OCI-LY7 (cell line): ENCODE measurements at regions of chr16 and their contacts with region 1.

Region 1: DNA sequence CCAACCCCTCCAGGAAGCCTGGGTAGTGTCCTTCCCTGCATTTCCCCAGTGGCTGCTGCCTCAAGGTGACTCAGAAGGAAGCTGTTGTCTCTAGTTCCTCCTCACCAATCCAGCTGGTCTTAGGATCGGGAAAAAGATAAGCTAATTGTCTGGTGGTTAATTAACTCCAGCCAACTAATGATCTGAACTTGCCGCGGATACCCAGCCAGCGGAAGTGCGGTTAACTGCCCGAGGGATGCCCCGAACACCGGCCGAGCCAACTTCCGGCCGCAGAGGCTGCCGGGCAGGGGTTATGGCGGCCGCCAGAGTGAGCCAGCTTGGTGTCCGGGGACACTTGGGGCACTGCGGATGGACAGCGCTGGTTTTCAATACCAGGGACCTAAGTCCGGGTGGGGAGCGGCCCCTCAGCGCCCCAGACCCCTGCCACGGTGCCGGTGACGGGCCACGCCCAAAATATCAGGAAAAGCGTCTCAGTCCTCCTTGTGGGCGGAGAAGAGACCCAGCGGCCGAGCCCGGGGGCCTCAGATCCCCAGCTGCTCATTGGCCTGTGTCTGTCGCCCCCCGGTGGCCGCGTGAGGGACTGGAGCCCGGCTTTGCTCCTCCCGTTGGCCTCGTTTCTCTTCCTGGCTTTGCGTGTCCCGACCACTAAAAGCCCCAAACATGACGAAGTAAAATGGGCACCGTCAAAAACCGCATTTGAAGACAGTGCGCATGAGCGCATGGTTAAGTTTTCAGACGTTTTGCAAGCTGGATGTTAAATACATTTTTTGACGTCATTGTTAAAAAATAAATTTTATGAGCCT is 10.2 kb upstream of the PRSS22 start:
- DNase-seq: peak; percentile 92
- H3K4me3 ChIP-seq: peak overlapping the region; percentile 70
- H3K27ac ChIP-seq: peak overlapping the region; percentile 68
- H3K4me1 ChIP-seq: peaks cover 7% of the 10 kb centered on the region
- CTCF ChIP-seq: peak; percentile 93

Region 2: GRCh38 chr16:2752035-2752849 is 115.9 kb before region 1 on chr16 and contains the start of gene SRRM2:
- CTCF ChIA-PET with region 1: no interaction called
- POLR2A ChIA-PET with region 1: no interaction called
- intact Hi-C with region 1: loop called (anchors 1 kb)
- DNase-seq: peak; percentile 98
- H3K4me3 ChIP-seq: peak within 1 kb of the TSS; percentile 99
- H3K27ac ChIP-seq: peak within 1 kb of the TSS; percentile 95
- H3K4me1 ChIP-seq: peaks cover 35% of the 10 kb centered on the region
- CTCF ChIP-seq: no peak
- total RNA-seq, gene SRRM2: 206 and 208 TPM in 2 replicates

Region 3: DNA sequence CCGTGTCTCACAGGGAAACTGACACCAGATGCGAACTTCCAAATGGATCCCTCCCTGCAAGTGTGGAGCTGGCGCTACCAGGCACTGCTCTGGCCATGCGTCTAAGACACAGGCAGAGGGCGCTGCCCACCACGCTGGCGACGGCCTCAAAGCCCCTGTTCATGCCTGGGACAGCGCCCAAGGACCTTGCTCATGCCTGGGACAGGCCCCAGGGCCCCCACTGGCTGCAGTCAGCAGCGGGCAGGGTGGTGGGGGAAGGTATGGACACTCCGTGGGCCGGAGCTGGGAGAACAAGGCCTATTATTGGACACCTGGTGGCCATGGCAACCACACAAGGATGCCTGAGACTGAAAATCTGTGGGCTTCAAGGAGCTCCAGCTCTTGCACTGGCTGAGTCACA is 29.3 kb before region 1 on chr16:
- CTCF ChIA-PET with region 1: interaction called, 3 read pairs
- POLR2A ChIA-PET with region 1: interaction called, 4 read pairs
- intact Hi-C with region 1: loop called (anchors 1 kb)
- DNase-seq: peak; percentile 74
- H3K4me3 ChIP-seq: no peak overlapping the region
- H3K27ac ChIP-seq: no peak overlapping the region
- H3K4me1 ChIP-seq: no peaks in the 10 kb centered on the region
- CTCF ChIP-seq: peak; percentile 85

Region 4: DNA sequence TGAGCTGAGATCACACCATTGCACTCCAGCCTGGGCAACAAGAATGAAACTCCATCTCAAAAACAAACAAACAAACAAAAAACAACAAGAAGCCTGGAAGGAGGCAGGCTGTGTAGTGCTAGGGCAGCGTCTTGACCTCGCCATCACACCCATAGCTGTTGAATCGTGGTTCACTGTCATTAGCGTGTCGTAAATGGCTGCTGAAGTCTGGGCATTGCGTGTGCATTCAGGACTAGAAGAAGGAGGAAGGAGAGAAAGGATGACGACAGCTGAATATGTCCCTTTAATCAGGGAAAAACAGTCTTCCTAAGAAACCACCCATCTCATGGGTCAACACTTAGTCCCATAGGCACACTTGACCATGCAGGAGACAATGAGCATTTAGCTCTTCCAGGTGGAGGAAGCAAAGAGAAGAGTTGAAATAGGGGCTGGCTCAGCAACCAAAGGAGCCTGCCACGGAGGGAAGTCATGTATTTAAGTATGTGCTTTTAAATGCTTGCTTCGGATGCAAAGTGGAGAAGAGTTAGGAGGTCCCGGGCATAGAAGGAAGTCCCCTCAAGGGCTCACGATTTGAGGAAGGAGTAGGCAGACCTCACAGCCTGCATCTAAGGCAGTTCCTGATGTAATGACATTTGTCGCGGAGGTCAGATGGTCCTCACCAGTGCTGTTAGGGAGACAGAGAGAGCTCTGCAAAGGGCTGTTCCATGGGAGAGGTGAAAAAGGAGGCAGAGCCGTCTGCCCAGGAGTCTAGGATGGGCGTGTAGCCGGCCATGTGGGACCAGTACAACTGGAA is 19.1 kb before region 1 on chr16:
- CTCF ChIA-PET with region 1: no interaction called
- POLR2A ChIA-PET with region 1: no interaction called
- intact Hi-C with region 1: no loop called
- DNase-seq: no peak
- H3K4me3 ChIP-seq: no peak overlapping the region
- H3K27ac ChIP-seq: no peak overlapping the region
- H3K4me1 ChIP-seq: no peaks in the 10 kb centered on the region
- CTCF ChIP-seq: no peak

Region 5: GRCh38 chr16:2911580-2912329 is 43.6 kb after region 1 on chr16 and contains the start of gene FLYWCH1:
- CTCF ChIA-PET with region 1: no interaction called
- POLR2A ChIA-PET with region 1: interaction called, 4 read pairs
- intact Hi-C with region 1: loop called (anchors 2 kb)
- DNase-seq: peak; percentile 100
- H3K4me3 ChIP-seq: peak within 1 kb of the TSS; percentile 77
- H3K27ac ChIP-seq: no peak within 1 kb of the TSS
- H3K4me1 ChIP-seq: peaks cover 12% of the 10 kb centered on the region
- CTCF ChIP-seq: no peak; the same call in 1 of the 2 replicates
- total RNA-seq, gene FLYWCH1: 25.3 and 26.1 TPM in 2 replicates

Region 6: DNA sequence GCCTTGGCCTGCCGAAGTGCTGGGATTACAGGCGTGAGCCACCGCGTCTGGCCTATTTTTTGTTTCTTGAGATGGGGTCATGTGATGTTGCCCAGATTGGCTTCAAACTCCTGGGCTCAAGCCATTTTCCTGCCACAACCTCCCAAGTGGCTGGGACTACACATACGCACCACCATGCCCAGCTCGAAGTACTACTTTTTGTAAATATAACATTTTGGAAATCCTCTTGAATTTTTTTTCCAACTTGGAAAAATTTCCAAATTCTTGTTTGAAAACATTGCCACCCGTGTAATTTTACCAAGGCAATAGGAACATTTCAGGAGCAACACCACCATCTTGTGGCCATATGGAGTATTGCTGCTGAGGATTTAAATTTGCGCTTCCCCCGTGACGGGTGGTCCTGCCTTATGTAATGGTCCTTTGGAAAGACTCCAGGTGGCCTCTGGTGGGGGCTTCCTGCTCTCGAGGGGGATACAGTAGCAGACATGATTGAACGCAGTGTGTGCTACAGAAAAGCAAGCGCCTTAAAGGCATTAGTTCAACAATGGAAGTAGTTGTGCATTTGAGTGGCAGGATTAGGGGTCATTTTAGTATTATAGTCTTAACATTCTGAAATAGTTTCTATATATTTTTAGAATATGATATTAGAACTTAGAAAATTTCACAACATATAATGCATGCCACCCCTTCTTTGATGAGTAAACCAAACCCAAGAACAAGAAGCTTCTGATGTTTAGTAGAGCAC is 51.5 kb after region 1 on chr16:
- CTCF ChIA-PET with region 1: no interaction called
- POLR2A ChIA-PET with region 1: no interaction called
- intact Hi-C with region 1: loop called (anchors 2 kb)
- DNase-seq: peak; percentile 71
- H3K4me3 ChIP-seq: no peak overlapping the region
- H3K27ac ChIP-seq: no peak overlapping the region
- H3K4me1 ChIP-seq: no peaks in the 10 kb centered on the region
- CTCF ChIP-seq: peak; percentile 95

Region 7: GRCh38 chr16:3027945-3028712 is 159.9 kb after region 1 on chr16:
- CTCF ChIA-PET with region 1: interaction called, 10 read pairs
- POLR2A ChIA-PET with region 1: interaction called, 4 read pairs
- intact Hi-C with region 1: no loop called
- DNase-seq: peak; percentile 90
- H3K4me3 ChIP-seq: no peak overlapping the region
- H3K27ac ChIP-seq: no peak overlapping the region
- H3K4me1 ChIP-seq: peaks cover 14% of the 10 kb centered on the region
- CTCF ChIP-seq: peak; percentile 76